ENCODE measurements at regions of chr11 and their contacts with region 1.

Region 1: GRCh38 chr11:55936300-55936699 is at the start of gene OR5I1:
- DNase-seq: no peak
- ATAC-seq: no peak
- H3K4me3 ChIP-seq: no peak within 1 kb of the TSS
- H3K4me3 Mint-ChIP-seq: no peak within 1 kb of the TSS
- H3K27ac ChIP-seq: no peak within 1 kb of the TSS
- H3K27ac Mint-ChIP-seq: no peak within 1 kb of the TSS
- H3K4me1 ChIP-seq: no peaks in the 10 kb centered on the region
- H3K4me1 Mint-ChIP-seq: no peaks in the 10 kb centered on the region
- H3K27me3 ChIP-seq: no peaks in the 10 kb centered on the region
- H3K27me3 Mint-ChIP-seq: no peaks in the 10 kb centered on the region
- CTCF ChIP-seq: no peak
- total RNA-seq, gene OR5I1: not detected

Region 2: DNA sequence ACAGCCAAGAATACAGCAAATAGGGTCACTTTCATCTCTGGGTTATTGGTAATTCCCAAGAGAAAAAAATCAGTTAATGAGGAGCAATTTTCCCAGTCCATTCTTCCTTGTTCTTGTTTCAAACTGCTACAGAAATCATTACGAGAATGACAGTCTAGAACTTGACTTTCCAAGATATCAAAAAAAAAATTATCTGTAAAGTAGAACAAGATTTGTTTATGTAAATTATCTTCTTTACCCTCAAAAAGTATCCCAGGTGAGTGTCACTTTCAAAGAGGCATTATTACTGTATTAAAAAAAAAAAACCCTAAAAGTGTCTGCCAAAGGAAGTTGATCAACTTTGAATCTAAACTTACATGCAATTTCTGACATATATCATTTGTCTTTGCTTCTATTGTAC is 21.8 kb before region 1 on chr11 and contains the start of gene OR5W2:
- CTCF ChIA-PET with region 1: no interaction called
- POLR2A ChIA-PET with region 1: no interaction called
- intact Hi-C with region 1: loop called in 1 of 2 experiments (anchors 2 kb)
- DNase-seq: no peak
- ATAC-seq: no peak
- H3K4me3 ChIP-seq: no peak within 1 kb of the TSS
- H3K4me3 Mint-ChIP-seq: no peak within 1 kb of the TSS
- H3K27ac ChIP-seq: no peak within 1 kb of the TSS
- H3K27ac Mint-ChIP-seq: no peak within 1 kb of the TSS
- H3K4me1 ChIP-seq: no peaks in the 10 kb centered on the region
- H3K4me1 Mint-ChIP-seq: no peaks in the 10 kb centered on the region
- H3K27me3 ChIP-seq: no peaks in the 10 kb centered on the region
- H3K27me3 Mint-ChIP-seq: no peaks in the 10 kb centered on the region
- CTCF ChIP-seq: no peak
- total RNA-seq, gene OR5W2: not detected

Region 3: GRCh38 chr11:55994525-55994924 is 58.2 kb after region 1 on chr11 and contains the start of gene OR5F1:
- CTCF ChIA-PET with region 1: no interaction called
- POLR2A ChIA-PET with region 1: no interaction called
- intact Hi-C with region 1: loop called in 1 of 2 experiments (anchors 10 kb)
- DNase-seq: no peak
- ATAC-seq: no peak
- H3K4me3 ChIP-seq: no peak within 1 kb of the TSS
- H3K4me3 Mint-ChIP-seq: no peak within 1 kb of the TSS
- H3K27ac ChIP-seq: no peak within 1 kb of the TSS
- H3K27ac Mint-ChIP-seq: no peak within 1 kb of the TSS
- H3K4me1 ChIP-seq: no peaks in the 10 kb centered on the region
- H3K4me1 Mint-ChIP-seq: no peaks in the 10 kb centered on the region
- H3K27me3 ChIP-seq: no peaks in the 10 kb centered on the region
- H3K27me3 Mint-ChIP-seq: no peaks in the 10 kb centered on the region
- CTCF ChIP-seq: no peak
- total RNA-seq, gene OR5F1: not detected